ENCODE measurements at regions of chr10 and their contacts with region 1.

Region 1: DNA sequence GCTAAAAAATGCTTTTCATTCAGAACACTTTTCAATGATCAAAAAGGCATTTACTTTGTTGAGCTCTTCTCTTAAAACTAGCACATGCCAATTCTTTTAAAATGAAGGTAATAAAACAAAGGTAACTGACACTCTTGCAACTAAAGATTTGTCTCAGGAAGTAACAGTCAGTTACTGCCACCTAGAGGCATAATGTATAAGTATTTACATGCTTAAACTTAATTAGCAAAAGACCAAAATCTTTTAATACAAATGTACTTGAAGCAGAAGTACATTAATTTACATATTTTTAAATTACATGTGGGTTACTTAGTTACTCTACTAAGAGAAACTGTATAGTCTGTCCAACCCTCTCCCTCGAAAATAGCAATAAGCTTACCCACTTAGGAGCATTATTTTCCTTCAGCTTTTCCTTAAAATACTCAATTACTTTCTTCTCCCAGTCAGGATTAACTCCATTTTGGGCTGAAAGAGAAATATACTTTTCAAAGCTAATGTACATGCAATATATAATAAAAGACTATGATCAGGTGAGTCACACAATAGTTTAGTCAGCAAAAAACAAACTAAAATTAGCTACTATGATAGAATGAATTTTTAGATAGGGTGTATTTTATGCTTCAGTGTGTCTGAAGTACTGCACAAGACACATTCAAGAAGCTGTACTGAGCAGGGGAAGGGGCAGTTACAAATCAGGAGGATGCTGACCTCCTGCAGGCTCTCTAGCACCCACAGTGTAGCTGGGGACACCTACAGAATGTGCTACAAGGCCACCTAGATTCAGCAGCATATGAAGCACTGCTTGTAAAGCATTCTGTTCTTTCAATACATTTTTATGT is 13.0 kb downstream of the MCMBP start:
- DNase-seq: peak; percentile 63
- H3K4me3 ChIP-seq: no peak overlapping the region
- H3K27ac ChIP-seq: no peak overlapping the region
- H3K4me1 ChIP-seq: peaks cover 35% of the 10 kb centered on the region
- CTCF ChIP-seq: peak; percentile 95

Region 2: GRCh38 chr10:119608316-119609155 is 251.1 kb before region 1 on chr10:
- CTCF ChIA-PET with region 1: no interaction called
- POLR2A ChIA-PET with region 1: no interaction called
- intact Hi-C with region 1: loop called (anchors 10 kb)
- DNase-seq: peak; percentile 19
- H3K4me3 ChIP-seq: no peak overlapping the region
- H3K27ac ChIP-seq: no peak overlapping the region
- H3K4me1 ChIP-seq: no peaks in the 10 kb centered on the region
- CTCF ChIP-seq: peak; percentile 67

Region 3: GRCh38 chr10:119686439-119687191 is 173.0 kb before region 1 on chr10:
- CTCF ChIA-PET with region 1: no interaction called
- POLR2A ChIA-PET with region 1: interaction called, 4 read pairs
- intact Hi-C with region 1: loop called (anchors 1 kb)
- DNase-seq: peak; percentile 80
- H3K4me3 ChIP-seq: no peak overlapping the region
- H3K27ac ChIP-seq: no peak overlapping the region
- H3K4me1 ChIP-seq: no peaks in the 10 kb centered on the region
- CTCF ChIP-seq: peak; percentile 95

Region 4: DNA sequence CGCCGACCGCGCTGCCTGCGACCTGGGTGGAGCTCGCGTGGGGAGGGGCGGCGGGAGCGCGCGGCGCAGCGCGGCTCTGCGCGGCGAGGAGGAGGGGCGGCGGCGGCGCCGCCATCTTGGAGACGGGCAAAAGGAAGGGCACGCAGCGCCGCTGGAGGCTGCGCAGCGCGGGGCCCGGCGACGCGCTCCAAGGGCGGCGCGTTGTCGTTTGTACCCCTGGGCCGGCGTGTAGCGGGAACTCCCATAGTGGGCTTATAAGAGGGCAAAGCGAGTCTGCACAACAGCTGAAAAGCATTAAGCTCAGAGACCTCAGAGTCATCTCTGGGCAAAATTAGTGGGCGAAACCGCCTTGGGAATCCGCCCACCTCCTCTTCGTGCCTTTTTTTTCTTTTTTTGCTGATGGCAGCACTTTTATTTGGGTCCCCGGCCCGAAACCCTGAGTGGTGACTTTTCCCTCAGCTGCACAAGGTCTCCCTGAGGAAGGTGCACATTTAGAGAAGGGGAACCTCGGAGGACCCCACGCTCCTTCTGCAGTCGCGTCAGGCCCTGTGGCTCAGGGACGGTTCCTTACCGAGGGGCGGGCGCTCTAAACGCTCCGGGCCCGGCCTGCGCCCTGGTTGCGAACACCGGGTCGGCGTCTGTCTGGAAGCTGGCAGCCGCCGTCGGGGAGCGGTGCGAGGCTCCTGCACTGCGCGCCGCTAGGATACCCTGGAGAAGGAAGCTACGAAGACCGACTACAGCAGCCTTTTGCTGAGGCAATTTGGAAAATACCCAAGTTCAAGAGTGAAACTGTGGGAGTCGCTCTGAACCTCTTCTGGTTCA is 13.4 kb after region 1 on chr10:
- CTCF ChIA-PET with region 1: interaction called, 7 read pairs
- POLR2A ChIA-PET with region 1: interaction called, 11 read pairs
- intact Hi-C with region 1: no loop called
- DNase-seq: peak; percentile 91
- H3K4me3 ChIP-seq: peak overlapping the region; percentile 87
- H3K27ac ChIP-seq: peak overlapping the region; percentile 61
- H3K4me1 ChIP-seq: peaks cover 25% of the 10 kb centered on the region
- CTCF ChIP-seq: no peak

Region 5: DNA sequence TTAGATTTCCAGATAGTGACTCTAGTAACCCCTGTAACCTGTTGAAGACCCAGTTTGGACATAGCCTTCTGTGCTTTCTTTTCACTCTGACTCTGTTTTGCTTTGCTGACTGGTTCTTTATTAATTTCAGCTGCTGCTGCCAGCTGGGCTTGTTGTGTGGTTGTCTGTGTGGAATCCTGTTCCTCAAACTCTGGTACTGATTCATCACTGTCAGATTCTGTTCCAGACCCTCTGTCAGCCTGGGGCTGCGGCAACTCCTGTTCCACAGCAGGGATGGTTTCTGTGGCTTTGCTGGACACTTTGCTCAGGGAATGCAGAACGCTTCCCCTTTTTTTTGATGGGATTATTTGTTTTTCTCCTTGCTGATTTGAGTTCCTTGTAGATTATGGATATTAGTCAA is 137.8 kb after region 1 on chr10:
- CTCF ChIA-PET with region 1: no interaction called
- POLR2A ChIA-PET with region 1: no interaction called
- intact Hi-C with region 1: no loop called
- DNase-seq: no peak
- H3K4me3 ChIP-seq: no peak overlapping the region
- H3K27ac ChIP-seq: no peak overlapping the region
- H3K4me1 ChIP-seq: no peaks in the 10 kb centered on the region
- CTCF ChIP-seq: no peak

Region 6: GRCh38 chr10:120480065-120480600 is 620.5 kb after region 1 on chr10:
- CTCF ChIA-PET with region 1: no interaction called
- POLR2A ChIA-PET with region 1: no interaction called
- intact Hi-C with region 1: no loop called
- DNase-seq: no peak
- H3K4me3 ChIP-seq: no peak overlapping the region
- H3K27ac ChIP-seq: no peak overlapping the region
- H3K4me1 ChIP-seq: no peaks in the 10 kb centered on the region
- CTCF ChIP-seq: peak; percentile 26; the same call in 1 of the 2 replicates

Measured in OCI-LY7 (cell line).